Activated CD4-positive, alpha-beta T cell treated with anti-CD3 and anti-CD28 coated beads for 36 hours (primary cell): ENCODE measurements at regions of chr2 and their contacts with region 1.

Region 1: GRCh38 chr2:30072250-30072842 is 74.5 kb upstream of the YPEL5 start:
- DNase-seq: peak; percentile 83
- ATAC-seq: peak; percentile 92
- H3K4me3 Mint-ChIP-seq: no peak overlapping the region
- H3K27ac Mint-ChIP-seq: no peak overlapping the region
- H3K4me1 Mint-ChIP-seq: no peaks in the 10 kb centered on the region
- H3K27me3 Mint-ChIP-seq: peaks cover 25% of the 10 kb centered on the region

Region 2: GRCh38 chr2:29733965-29734364 is 338.4 kb before region 1 on chr2:
- CTCF ChIA-PET with region 1: no interaction called
- POLR2A ChIA-PET with region 1: no interaction called
- intact Hi-C with region 1: no loop called
- DNase-seq: no peak
- ATAC-seq: no peak
- H3K4me3 Mint-ChIP-seq: no peak overlapping the region
- H3K27ac Mint-ChIP-seq: no peak overlapping the region
- H3K4me1 Mint-ChIP-seq: no peaks in the 10 kb centered on the region
- H3K27me3 Mint-ChIP-seq: peaks cover 12% of the 10 kb centered on the region

Region 3: DNA sequence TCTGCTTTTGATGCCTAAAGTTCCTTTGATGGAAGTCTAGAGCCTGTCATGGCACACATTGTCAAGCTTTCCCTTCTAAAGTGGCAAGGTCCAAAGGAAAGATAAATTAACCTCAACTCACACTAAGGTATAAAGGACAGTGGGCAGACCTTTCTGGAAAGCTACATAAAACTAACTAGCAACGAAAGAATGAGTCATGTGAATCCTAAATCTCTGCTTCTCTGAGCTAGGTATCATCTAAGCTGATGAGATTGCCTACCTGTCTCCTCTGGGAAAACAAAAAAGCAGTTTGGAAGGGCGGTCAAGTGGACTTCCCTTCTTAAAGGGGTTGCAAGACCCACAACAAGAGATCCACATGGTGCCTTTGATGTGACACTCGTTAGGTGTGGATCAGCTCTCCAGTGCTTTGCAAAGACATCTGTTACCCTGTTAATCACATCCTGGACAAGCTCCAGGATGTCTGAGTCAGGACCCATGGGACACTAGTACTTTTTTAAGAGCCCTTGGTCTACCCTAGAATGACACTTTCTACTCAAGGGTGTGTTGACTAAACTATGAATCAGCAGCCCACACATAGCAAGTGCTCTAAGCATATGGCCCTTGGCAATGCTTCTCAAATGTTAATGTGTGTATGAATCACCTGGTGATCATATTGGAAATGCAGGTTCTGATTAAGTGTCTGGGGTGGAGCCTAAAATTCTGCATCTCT is 324.4 kb before region 1 on chr2:
- CTCF ChIA-PET with region 1: no interaction called
- POLR2A ChIA-PET with region 1: no interaction called
- intact Hi-C with region 1: no loop called
- DNase-seq: peak; percentile 22
- ATAC-seq: peak; percentile 97
- H3K4me3 Mint-ChIP-seq: no peak overlapping the region
- H3K27ac Mint-ChIP-seq: no peak overlapping the region
- H3K4me1 Mint-ChIP-seq: peaks cover 2% of the 10 kb centered on the region
- H3K27me3 Mint-ChIP-seq: peaks cover 8% of the 10 kb centered on the region

Region 4: GRCh38 chr2:29841386-29842004 is 230.9 kb before region 1 on chr2:
- CTCF ChIA-PET with region 1: no interaction called
- POLR2A ChIA-PET with region 1: no interaction called
- intact Hi-C with region 1: loop called in 1 of 2 experiments (anchors 1 kb)
- DNase-seq: peak; percentile 36
- ATAC-seq: no peak
- H3K4me3 Mint-ChIP-seq: no peak overlapping the region
- H3K27ac Mint-ChIP-seq: no peak overlapping the region
- H3K4me1 Mint-ChIP-seq: no peaks in the 10 kb centered on the region
- H3K27me3 Mint-ChIP-seq: peaks cover 4% of the 10 kb centered on the region